Activated T-helper 2 cell treated with anti-CD3 and anti-CD28 coated beads, Interferon-gamma antibody, Interleukin-2, Interleukin-4, amounts not matched to agents 10 μg/mL and 5 μg/mL and 100 μg/mL, durations not matched to agents 14 hours and 24 hours and 36 hours (primary cell): ENCODE measurements at regions of chr19 and their contacts with region 1.

Region 1: DNA sequence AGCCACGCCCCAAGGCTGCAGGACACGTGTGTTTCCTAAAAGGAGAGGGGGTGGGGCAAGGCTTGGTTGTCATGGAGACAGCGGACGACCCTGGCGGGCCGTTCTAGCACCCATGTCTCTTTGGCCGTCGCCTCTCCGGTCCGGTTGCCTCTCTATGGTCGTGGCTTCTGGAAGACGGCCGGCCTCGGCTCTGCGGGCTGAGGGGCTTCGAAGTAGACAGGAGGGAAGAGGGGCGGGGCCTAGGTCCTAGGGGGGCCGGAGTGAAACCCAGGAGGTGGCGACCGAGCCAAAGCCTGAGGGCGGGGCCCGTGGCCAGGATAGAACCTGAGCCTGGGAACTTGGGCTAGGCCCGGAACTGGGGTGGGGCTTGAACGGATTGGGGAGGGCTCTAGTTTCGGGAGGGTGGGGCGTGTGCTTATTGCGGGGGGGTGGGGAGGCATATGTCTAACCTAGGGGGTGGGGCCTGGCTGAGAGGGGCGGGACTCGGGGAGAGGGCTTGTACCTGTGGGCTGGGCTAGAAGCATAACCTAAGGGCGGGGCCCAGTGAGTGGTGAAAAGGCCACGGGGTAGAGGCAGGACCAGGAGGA is 750 bp upstream of the SLC27A1 start:
- DNase-seq: peak; percentile 81
- H3K4me3 Mint-ChIP-seq: peak overlapping the region; percentile 94
- H3K27ac Mint-ChIP-seq: peak overlapping the region; percentile 79
- H3K4me1 Mint-ChIP-seq: peaks cover 20% of the 10 kb centered on the region
- H3K27me3 Mint-ChIP-seq: peaks cover 6% of the 10 kb centered on the region

Region 2: GRCh38 chr19:17346109-17346671 is 123.4 kb before region 1 on chr19:
- intact Hi-C with region 1: loop called (anchors 5 kb)
- DNase-seq: peak; percentile 70
- H3K4me3 Mint-ChIP-seq: no peak overlapping the region
- H3K27ac Mint-ChIP-seq: no peak overlapping the region
- H3K4me1 Mint-ChIP-seq: peaks cover 7% of the 10 kb centered on the region
- H3K27me3 Mint-ChIP-seq: peaks cover 11% of the 10 kb centered on the region

Region 3: DNA sequence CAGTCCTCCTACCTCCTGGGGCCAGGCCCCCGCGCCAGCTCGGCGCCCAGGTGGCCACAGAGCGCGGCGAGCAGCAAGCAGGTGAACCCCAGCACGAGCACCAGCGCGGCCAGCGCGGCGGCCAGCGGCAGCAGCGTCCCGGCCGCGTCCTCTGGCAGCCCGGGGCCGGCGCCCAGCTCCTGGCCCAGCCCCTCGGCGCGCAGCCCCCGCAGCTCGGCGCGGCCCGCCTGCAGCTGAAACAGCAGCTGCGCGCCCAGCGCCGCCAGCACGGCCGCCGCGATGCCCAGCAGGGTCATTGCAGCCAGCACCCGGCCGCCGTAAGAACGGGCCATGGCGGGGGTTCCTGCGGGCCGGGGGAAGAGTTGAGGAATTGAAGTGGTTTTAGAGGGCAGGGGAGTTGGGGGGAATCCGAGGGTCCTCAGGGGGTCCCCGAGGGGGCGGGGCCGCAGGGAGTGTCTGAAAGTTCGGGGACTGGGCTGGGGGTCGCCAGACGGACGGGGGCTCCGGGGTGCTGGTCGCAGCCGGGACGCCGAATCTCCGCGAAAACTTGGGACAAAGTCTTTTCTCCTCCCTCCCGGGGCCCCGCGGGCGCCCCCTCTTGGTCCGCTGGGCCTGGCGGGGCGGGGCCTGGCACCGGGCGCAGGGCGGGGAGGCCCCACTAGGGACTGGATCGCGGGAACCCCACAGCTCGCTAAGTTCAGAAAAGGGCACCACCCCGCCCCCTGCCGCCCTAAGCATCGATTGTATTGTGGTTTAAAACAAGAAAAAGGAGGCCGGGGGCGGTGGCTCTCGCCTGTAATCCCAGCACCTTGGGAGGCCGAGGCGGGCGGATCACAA is 21.2 kb before region 1 on chr19 and contains the start of gene TMEM221:
- intact Hi-C with region 1: no loop called
- DNase-seq: peak; percentile 30
- H3K4me3 Mint-ChIP-seq: no peak within 1 kb of the TSS
- H3K27ac Mint-ChIP-seq: no peak within 1 kb of the TSS
- H3K4me1 Mint-ChIP-seq: peaks cover 13% of the 10 kb centered on the region
- H3K27me3 Mint-ChIP-seq: peaks cover 15% of the 10 kb centered on the region
- total RNA-seq, gene TMEM221: not detected in 2 replicates